ENCODE measurements at regions of chr1 and their contacts with region 1.

Region 1: DNA sequence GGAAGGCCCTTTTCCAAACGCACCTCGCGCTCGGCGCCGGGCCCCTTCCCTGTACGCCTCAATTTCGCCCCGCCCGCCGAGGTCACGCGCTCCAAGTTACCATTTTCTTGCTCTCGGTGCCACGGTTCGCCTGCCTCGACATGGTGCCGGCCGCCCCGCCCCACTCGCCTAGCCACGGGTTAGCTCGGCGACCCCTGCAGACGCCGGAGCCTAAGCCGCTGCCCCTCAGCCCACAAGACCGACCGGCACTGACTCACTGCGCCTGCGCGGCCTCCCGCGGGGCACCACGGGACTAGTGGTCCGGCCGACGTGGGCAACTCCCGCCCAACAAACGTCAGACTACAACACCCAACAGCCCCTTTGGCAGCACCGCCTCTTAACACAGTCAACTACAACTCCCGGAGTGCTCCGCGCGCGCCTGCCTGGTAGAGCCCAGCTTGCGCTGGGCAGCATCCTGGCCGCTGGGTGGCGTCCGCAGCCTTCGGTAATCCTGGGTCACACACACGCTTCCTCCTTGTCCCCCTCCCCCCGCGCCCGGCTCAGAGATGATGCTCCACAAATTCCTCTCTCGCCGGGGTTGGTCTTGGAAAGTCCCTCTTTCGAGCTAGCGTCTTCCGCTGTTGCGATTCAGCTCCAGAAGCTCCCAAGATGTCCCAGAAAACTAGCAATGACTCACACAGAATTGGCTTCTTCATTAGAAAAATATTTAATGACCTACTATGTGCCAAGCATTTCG is at the start of gene TRAPPC3:
- DNase-seq: peak; percentile 99
- H3K4me3 ChIP-seq: peak within 1 kb of the TSS; percentile 75
- H3K27ac ChIP-seq: peak within 1 kb of the TSS; percentile 99
- H3K27me3 ChIP-seq: no peaks in the 10 kb centered on the region
- CTCF ChIP-seq: peak; percentile 94
- polyA plus RNA-seq, gene TRAPPC3: 88.5 and 92.3 TPM in 2 replicates

Region 2: DNA sequence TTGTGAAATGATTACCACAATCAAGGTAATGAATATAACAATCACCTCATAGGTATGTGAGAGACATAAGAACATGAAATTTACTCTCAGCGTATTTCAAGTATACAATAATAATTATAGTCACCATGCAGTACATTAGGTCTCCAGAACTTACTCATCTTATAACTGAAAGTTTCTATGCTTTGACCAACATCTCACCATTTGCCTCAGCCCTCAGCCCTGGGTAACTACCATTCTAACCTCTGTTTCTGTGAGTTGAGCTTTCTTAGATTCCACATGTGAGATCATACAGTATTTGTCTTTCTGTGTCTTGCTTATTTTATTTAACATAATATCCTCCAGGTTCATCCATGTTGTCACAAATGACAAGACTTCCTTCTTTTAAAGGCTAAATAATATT is 161.2 kb before region 1 on chr1:
- CTCF ChIA-PET with region 1: no interaction called
- POLR2A ChIA-PET with region 1: no interaction called
- DNase-seq: no peak
- H3K4me3 ChIP-seq: no peak overlapping the region
- H3K27ac ChIP-seq: no peak overlapping the region
- H3K27me3 ChIP-seq: no peaks in the 10 kb centered on the region
- CTCF ChIP-seq: no peak

Region 3: GRCh38 chr1:36134505-36135329 is 14.7 kb before region 1 on chr1:
- CTCF ChIA-PET with region 1: interaction called, 32 read pairs
- POLR2A ChIA-PET with region 1: interaction called, 8 read pairs
- DNase-seq: no peak
- H3K4me3 ChIP-seq: no peak overlapping the region
- H3K27ac ChIP-seq: peak overlapping the region; percentile 47
- H3K27me3 ChIP-seq: no peaks in the 10 kb centered on the region
- CTCF ChIP-seq: peak; percentile 68

Region 4: DNA sequence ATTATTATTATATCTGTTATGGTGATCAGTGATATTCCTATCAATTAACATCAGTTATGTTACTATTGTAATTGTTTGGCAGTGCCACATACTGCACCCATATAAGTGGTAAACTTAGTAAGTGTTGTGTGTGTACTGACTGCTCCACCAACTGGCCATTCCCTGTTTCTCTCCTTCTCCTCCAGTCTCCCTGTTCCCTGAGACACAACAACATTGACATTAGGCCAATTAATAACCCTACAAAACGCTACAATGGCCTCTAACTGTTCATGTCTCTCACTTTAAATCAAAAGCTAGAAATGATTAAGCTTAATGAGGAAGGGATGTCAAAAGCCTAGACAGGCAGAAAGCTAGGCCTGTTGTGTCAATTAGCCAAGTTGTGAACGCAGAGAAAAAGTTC is 68.3 kb after region 1 on chr1:
- CTCF ChIA-PET with region 1: interaction called, 10 read pairs
- POLR2A ChIA-PET with region 1: interaction called, 17 read pairs
- DNase-seq: no peak
- H3K4me3 ChIP-seq: no peak overlapping the region
- H3K27ac ChIP-seq: no peak overlapping the region
- H3K27me3 ChIP-seq: no peaks in the 10 kb centered on the region
- CTCF ChIP-seq: peak; percentile 45

Region 5: DNA sequence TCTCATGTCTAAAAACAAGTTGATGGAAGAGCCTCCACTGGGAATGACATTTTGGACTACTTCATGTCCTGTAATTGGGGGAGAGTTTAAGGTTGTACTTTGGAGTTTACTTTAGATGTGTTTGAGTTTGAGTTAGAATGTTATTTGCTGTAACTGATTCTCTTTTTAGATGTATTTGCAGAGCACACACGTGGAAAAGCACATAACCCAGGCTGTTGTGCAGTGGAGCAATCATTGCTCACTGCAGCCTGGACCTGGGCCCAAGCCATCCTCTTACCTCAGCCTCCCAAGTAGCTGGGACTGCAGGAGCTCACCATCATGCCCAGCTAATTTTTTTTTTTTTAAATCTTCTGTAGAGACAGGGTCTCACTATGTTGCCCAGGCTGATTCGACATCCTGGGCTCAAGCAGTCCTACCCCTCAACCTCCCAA is 120.0 kb after region 1 on chr1:
- CTCF ChIA-PET with region 1: interaction called, 14 read pairs
- POLR2A ChIA-PET with region 1: interaction called, 5 read pairs
- DNase-seq: no peak
- H3K4me3 ChIP-seq: no peak overlapping the region
- H3K27ac ChIP-seq: no peak overlapping the region
- H3K27me3 ChIP-seq: no peaks in the 10 kb centered on the region
- CTCF ChIP-seq: no peak

Region 6: DNA sequence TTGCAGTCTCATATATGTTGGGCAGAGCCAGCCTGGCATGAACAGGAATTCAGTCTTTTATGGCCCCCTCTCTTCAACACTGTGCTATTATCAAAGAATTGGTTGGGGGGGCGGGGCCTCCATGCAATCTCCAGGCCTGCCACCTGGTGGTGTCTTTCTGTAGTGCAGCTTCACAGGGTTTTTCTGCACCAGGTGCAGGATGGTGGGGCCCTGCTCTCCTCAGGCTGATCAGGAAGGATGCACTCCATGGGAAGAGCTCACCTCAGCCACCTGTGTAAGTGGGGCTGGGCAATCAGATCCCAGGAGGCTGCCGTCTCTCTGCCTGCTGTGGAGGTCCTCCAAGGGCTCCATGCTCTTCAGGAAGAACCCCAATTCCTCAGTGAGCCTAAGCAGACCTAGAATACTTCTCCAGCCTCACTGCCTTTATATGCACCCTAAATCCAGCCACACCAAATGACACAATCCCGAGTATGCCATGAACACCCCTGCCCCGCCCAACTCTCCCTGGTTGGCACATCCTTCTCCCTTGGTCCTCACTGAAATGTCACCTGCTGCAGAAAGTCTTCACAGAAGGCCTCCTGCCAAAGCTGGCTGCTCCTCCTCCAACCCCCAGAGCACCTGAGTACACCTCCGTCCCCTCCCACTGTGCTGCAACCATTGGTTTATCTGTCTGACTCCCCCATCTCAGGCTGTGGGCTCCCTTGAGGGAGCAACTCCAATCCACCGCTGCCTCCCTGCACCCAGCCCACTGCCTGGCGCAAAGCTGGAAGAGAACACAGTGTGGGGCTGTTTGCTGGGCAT is 219.9 kb after region 1 on chr1:
- CTCF ChIA-PET with region 1: interaction called, 21 read pairs
- POLR2A ChIA-PET with region 1: no interaction called
- DNase-seq: no peak
- H3K4me3 ChIP-seq: no peak overlapping the region
- H3K27ac ChIP-seq: no peak overlapping the region
- H3K27me3 ChIP-seq: no peaks in the 10 kb centered on the region
- CTCF ChIP-seq: peak; percentile 89

Region 7: DNA sequence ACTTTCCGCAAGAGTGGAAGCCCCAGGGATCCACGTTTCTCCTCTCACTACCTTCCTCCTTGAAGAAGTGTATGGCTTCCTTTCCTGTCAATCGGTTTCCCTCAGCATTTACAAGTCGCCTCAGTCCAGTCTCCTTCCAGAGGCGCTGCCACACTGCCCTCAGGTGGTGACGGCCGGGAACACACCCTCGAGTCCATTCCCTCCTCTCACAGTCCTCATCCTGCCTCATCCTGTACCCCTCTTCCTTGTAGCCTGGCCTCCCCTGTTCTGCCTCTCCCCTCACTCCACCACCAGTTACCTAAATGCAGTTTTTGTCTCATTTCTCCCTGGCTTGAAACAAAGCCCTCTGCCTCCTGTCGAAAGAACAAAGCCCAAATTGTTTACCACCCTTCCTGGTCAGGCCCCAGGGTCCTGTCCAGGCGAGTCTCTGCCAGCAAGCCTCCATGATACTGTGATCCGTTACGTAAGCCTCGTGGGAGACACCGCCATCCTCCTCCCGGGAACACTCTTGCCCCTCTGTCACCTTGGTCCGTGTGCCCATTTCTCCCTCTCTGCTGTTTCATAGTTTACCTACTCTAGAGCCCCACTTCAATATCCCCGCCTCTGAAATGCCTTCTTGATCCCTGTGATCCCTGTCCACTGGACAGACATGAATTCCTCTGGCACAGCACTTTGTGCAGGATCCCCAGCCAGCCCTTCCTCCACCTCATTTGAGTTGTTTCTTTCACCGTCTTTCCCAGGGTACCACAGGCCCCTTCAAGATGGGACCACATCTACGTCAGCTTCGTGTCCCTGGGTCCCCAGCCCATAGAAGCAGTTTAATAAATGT is 271.6 kb after region 1 on chr1:
- CTCF ChIA-PET with region 1: interaction called, 22 read pairs
- POLR2A ChIA-PET with region 1: interaction called, 10 read pairs
- DNase-seq: peak; percentile 61
- H3K4me3 ChIP-seq: no peak overlapping the region
- H3K27ac ChIP-seq: no peak overlapping the region
- H3K27me3 ChIP-seq: no peaks in the 10 kb centered on the region
- CTCF ChIP-seq: peak; percentile 98

Measured in AG04450 (cell line).